Gastrocnemius medialis (tissue), 4 donors: ENCODE measurements at regions of chr3 and their contacts with region 1.

Region 1: GRCh38 chr3:167684388-167684993 is 30.7 kb upstream of the WDR49 start:
- DNase-seq: no peak
- ATAC-seq: peak in 1 of 2 donors; percentile 71
- H3K4me3 ChIP-seq: no peak overlapping the region
- H3K27ac ChIP-seq: no peak overlapping the region
- H3K4me1 ChIP-seq: no peaks in the 10 kb centered on the region
- H3K27me3 ChIP-seq: no peaks in the 10 kb centered on the region
- CTCF ChIP-seq: peak; percentile 45 to 74 (median 60)
- POLR2A ChIP-seq: no peak

Region 2: GRCh38 chr3:167380004-167380689 is 304.3 kb before region 1 on chr3 and contains the start of gene ZBBX:
- in situ Hi-C with region 1: loop called in 1 of 4 experiments (anchors 25 kb)
- intact Hi-C with region 1: loop called (anchors 2 kb)
- DNase-seq: peak; percentile 17 to 66
- ATAC-seq: peak; percentile 75 to 97
- H3K4me3 ChIP-seq: peak within 1 kb of the TSS; percentile 38 to 56 (median 46)
- H3K27ac ChIP-seq: no peak within 1 kb of the TSS
- H3K4me1 ChIP-seq: peaks cover 7 to 9% of the 10 kb centered on the region in 2 donors
- H3K27me3 ChIP-seq: no peaks in the 10 kb centered on the region
- CTCF ChIP-seq: peak; percentile 55 to 80 (median 77)
- POLR2A ChIP-seq: no peak
- total RNA-seq, gene ZBBX: not detected